Common myeloid progenitor, CD34-positive (primary cell): ENCODE measurements at regions of chr7 and their contacts with region 1.

Region 1: DNA sequence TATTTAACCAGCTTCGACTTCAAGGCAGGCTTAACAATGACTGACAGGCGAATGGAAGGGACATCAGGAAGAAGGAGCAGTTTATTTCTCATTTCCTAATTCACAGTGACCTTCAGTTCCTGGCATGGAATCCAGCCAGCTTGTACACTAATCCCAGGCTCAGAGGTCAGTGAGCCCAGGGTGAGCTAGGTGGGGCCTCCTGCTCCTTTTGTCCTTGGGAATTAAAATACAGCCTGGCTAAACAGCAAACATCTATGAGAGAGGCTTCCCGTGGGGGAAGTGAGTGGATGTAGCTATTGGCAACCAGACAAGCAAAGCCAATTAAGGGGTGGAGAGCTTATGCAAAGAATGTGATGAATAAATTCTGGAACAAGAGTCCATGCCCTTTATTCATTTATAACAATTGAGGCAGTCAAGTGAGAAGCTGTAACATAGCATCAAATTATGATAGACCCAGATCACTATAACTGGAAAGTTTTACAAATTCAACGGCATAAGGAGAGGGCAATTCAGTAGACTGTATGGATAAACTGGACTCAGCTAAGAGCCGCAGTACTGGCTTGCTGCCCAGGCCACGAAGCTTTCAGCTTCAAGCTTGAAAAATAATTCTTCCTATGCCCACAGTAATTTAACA is 57.1 kb downstream of the STK17A start:
- DNase-seq: no peak
- H3K4me3 ChIP-seq: no peak overlapping the region
- H3K27ac ChIP-seq: no peak overlapping the region
- H3K4me1 ChIP-seq: no peaks in the 10 kb centered on the region
- H3K27me3 ChIP-seq: no peaks in the 10 kb centered on the region

Region 2: DNA sequence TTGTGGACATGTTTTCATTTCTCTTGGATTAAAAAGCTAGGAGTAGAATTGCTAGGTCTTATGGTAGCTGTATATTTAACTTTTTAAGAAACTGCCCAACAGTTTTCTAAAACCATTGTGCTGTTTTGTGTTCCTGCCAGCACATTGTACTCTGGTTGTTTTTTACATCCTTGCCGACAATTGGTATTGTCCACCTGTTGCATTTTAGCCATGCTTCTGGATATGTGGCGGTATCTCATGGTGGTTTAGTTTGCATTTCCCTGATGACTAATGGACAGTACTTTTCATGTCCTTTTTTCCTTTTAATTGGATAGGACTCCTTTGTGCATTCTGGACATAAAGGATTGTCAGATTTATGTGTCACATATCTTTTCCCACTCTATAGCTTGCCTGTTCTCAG is 11.5 kb before region 1 on chr7:
- CTCF ChIA-PET with region 1: interaction called, 13 read pairs
- POLR2A ChIA-PET with region 1: no interaction called
- DNase-seq: no peak
- H3K4me3 ChIP-seq: no peak overlapping the region
- H3K27ac ChIP-seq: no peak overlapping the region
- H3K4me1 ChIP-seq: peaks cover 0 to 4% (median 0%) of the 10 kb centered on the region in 4 experiments
- H3K27me3 ChIP-seq: no peaks in the 10 kb centered on the region

Region 3: GRCh38 chr7:43977525-43977924 is 337.6 kb after region 1 on chr7:
- CTCF ChIA-PET with region 1: no interaction called
- POLR2A ChIA-PET with region 1: no interaction called
- DNase-seq: no peak
- H3K4me3 ChIP-seq: no peak overlapping the region
- H3K27ac ChIP-seq: no peak overlapping the region
- H3K4me1 ChIP-seq: peaks cover 0 to 3% (median 0%) of the 10 kb centered on the region in 4 experiments
- H3K27me3 ChIP-seq: no peaks in the 10 kb centered on the region